ENCODE measurements at regions of chrX and their contacts with region 1.

Region 1: DNA sequence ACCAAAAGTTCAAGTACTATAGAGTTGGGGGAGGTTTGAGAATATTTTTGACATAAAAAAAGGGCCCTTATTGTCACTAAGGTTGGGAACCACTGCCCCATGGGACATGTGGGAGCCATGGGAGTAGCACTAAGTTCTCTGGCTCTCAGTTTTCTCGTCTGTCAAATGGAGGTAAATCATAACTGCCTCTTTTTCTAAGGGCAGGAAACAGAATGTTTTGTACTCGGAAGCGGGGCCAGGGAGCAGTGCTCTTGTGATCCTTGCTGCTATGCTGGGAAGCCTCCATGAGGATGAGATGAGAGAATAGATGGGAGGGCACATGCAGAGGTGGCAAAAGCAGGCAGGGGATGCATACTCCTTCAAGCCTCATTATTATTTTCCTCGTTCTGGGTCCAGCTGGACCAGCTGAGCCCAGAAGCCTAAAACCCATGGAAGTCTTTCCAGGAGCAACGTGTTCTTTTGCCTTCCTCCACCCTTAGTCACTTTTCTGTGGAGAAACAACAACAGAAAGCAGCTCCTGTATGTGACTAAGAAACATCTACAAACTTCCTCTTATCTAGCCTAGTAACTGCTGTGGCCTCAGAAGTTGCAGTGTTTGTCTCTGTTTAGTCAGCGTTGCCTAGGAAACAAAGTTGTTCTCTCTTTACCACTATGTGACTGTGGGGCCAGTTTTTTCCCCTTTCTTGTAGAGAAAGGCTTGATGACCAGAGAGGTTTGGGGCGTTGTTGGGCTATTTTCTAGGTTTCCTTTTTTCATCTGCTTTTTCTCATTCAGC is 64.8 kb downstream of the TSC22D3 start:
- DNase-seq: peak; percentile 65 to 99
- H3K4me3 ChIP-seq: no peak overlapping the region
- H3K27ac ChIP-seq: peak overlapping the region; percentile 87
- H3K4me1 ChIP-seq: peaks cover 36% of the 10 kb centered on the region
- H3K27me3 ChIP-seq: no peaks in the 10 kb centered on the region
- CTCF ChIP-seq: no peak

Region 2: DNA sequence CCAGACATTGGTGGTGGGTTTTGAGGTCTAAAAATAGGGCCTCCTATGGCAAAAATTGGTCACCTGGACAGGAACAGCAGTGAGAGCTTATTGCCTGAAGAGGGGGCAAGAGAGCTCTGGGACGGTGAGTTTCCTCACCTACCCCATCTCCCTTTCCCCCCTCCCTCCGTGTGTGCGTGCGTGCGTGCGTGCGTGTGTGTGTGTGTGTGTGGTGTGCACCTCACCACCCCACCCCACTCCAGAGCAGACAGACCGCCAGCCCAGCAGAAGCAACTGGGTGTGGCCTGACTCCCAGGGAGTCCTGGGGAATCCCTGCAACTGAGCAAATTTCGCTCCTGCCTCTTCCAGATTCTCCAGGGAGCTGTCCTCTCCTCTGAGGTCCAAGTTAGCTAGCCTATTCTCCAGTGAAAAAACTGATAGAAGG is 37.8 kb before region 1 on chrX:
- CTCF ChIA-PET with region 1: interaction called, 21 read pairs
- POLR2A ChIA-PET with region 1: interaction called, 12 read pairs
- intact Hi-C with region 1: loop called (anchors 1 kb)
- DNase-seq: peak; percentile 56 to 70
- H3K4me3 ChIP-seq: no peak overlapping the region; the same call in 1 of the 2 replicates
- H3K27ac ChIP-seq: no peak overlapping the region
- H3K4me1 ChIP-seq: peaks cover 49% of the 10 kb centered on the region
- H3K27me3 ChIP-seq: no peaks in the 10 kb centered on the region
- CTCF ChIP-seq: peak; percentile 82

Region 3: DNA sequence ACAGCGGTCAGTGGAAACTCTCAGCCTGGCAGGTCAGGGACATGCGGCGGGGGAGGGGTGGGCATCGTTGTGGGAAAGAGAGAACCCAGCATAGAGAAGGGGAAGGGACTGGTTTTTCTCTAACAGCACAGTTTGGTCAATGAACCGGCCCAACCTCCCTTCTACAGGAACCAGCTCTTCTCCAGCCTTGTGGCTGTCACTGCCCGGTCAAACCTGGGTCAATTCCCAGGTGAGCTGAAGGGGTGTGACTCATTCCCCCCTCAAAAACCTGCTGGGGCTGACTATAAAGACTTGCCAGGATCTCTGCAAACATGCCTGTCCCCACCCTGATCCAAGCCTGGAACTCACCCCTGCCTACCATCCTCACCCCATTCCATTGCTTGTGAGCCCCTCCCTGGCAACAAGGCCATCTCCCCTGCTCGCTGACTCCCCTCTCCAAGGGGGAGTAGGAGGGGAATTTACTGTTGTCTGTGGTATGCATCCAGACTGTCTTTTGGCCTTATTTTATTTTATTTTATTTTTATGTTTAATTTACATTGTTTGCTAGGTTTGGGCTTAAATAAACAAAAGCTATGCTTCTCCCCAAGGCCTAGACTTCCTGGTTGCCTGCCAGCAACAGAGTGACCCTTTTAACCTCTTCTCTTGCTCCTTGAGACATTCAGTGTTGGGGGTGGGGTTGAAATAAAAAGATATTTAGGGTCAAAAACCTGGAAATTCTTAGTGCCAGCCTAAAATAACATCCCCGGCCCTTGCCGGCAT is 15.1 kb after region 1 on chrX:
- CTCF ChIA-PET with region 1: no interaction called
- POLR2A ChIA-PET with region 1: no interaction called
- intact Hi-C with region 1: loop called (anchors 1 kb)
- DNase-seq: peak; percentile 90 to 96
- H3K4me3 ChIP-seq: peak overlapping the region; percentile 21; the same call in 1 of the 2 replicates
- H3K27ac ChIP-seq: peak overlapping the region; percentile 87
- H3K4me1 ChIP-seq: peaks cover 95% of the 10 kb centered on the region
- H3K27me3 ChIP-seq: no peaks in the 10 kb centered on the region
- CTCF ChIP-seq: no peak

Region 4: DNA sequence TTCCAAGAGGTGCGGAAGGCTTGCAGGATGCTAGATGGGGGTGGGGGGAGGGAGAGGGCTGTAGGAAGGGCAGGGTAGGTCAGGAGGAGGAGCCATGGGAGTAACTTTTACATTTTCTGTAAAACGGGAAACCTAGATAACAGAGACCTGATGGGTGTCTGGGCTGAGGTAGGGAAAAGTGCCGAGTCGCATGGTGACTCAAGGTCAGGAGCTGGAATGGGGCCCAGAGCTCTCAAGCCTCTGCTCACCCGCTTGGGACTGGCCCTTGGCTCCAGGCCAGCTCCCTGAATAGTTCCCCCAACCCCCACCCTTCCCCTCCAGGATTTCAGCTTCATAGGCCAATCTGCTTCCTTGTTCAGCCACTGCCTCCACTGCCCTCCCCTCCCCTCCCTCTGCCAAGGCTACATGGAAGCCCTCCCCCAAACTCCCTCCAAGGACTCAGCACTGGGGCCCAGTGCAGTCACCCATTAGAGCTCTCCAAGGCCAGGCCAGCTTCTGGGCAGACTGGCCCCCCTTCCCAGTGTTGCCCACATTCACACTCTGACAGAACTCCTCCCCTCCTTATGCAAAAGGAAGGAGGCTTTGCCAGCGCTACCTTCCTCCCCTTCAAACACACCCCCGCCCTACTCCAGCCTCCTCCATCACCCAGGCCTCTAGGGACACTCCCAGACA is 21.2 kb after region 1 on chrX:
- CTCF ChIA-PET with region 1: no interaction called
- POLR2A ChIA-PET with region 1: interaction called, 10 read pairs
- intact Hi-C with region 1: no loop called
- DNase-seq: peak; percentile 93 to 95
- H3K4me3 ChIP-seq: no peak overlapping the region
- H3K27ac ChIP-seq: peak overlapping the region; percentile 63
- H3K4me1 ChIP-seq: peaks cover 81% of the 10 kb centered on the region
- H3K27me3 ChIP-seq: no peaks in the 10 kb centered on the region
- CTCF ChIP-seq: no peak

Region 5: DNA sequence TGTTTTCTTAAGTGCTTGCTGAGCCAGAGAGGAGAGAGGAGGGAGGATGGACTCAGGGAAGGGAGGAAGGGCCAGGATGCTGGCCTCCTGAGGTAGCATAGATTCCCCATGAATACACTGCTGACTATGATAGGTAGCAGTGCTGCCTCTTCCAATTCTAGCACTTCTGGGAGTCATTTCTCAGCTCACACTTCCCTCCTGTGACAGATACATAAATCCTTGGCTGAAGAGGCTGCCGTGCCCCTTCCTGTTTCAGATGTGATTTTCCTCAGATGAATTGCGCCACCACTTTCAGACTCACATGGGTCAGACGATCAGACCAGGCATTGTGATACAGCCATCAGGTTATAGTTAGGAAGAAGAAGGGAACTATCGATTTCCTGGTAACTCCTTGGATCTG is 42.4 kb after region 1 on chrX:
- CTCF ChIA-PET with region 1: no interaction called
- POLR2A ChIA-PET with region 1: no interaction called
- intact Hi-C with region 1: no loop called
- DNase-seq: no peak
- H3K4me3 ChIP-seq: no peak overlapping the region
- H3K27ac ChIP-seq: no peak overlapping the region
- H3K4me1 ChIP-seq: peaks cover 3% of the 10 kb centered on the region
- H3K27me3 ChIP-seq: no peaks in the 10 kb centered on the region
- CTCF ChIP-seq: no peak

Measured in PC-9 (cell line).